Common myeloid progenitor, CD34-positive (primary cell): ENCODE measurements at regions of chr10 and their contacts with region 1.

Region 1: GRCh38 chr10:49254556-49255318 is 44.2 kb upstream of the C10orf71 start:
- DNase-seq: peak; percentile 74 to 95 (median 92)
- H3K4me3 ChIP-seq: peak overlapping the region in 6 of 7 experiments; percentile 1 to 55 (median 30)
- H3K27ac ChIP-seq: peak overlapping the region in 1 of 2 experiments; percentile 3
- H3K4me1 ChIP-seq: peaks cover 20 to 57% (median 40%) of the 10 kb centered on the region in 4 experiments
- H3K27me3 ChIP-seq: no peaks in the 10 kb centered on the region

Region 2: GRCh38 chr10:49135575-49136313 is 119.0 kb before region 1 on chr10:
- CTCF ChIA-PET with region 1: no interaction called
- POLR2A ChIA-PET with region 1: no interaction called
- DNase-seq: peak in 1 of 3 donors; percentile 33
- H3K4me3 ChIP-seq: no peak overlapping the region
- H3K27ac ChIP-seq: no peak overlapping the region
- H3K4me1 ChIP-seq: peaks cover 0 to 26% (median 3%) of the 10 kb centered on the region in 4 experiments
- H3K27me3 ChIP-seq: no peaks in the 10 kb centered on the region

Region 3: GRCh38 chr10:49272251-49273081 is 17.7 kb after region 1 on chr10:
- CTCF ChIA-PET with region 1: interaction called, 21 read pairs
- POLR2A ChIA-PET with region 1: interaction called, 14 read pairs
- DNase-seq: peak; percentile 78 to 95 (median 93)
- H3K4me3 ChIP-seq: peak overlapping the region in 4 of 7 experiments; percentile 2 to 41 (median 20)
- H3K27ac ChIP-seq: peak overlapping the region in 1 of 2 experiments; percentile 47
- H3K4me1 ChIP-seq: peaks cover 7 to 47% (median 40%) of the 10 kb centered on the region in 4 experiments
- H3K27me3 ChIP-seq: no peaks in the 10 kb centered on the region